Right ventricle myocardium inferior (tissue), 1 donor: ENCODE measurements at regions of chr5 and their contacts with region 1.

Region 1: GRCh38 chr5:17216176-17216973 is 1.1 kb upstream of the BASP1 start:
- DNase-seq: peak; percentile 78
- ATAC-seq: peak; percentile 64

Region 2: DNA sequence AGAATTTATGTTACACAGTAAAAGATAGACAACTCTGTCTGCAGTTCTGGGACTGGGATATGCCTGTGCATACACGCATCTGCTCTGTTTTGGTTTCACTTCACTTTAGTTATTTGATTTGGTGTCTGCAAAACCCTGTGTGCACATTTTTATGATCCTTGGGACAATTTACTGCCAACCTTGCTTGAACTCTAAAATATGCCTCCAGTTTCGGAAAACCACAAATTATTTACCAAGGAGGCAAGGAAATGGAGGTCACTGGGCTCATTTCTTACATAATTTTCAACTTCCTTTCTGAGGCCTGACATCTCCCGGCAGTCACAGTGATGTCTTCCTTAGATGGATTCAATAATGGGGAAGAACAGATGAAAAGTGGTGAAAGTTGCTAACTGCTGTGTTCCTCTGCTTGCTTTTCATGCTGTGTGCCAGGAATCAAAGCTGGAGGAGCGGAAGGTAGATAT is 220.4 kb after region 1 on chr5:
- intact Hi-C with region 1: no loop called
- DNase-seq: no peak
- ATAC-seq: peak; percentile 64

Region 3: DNA sequence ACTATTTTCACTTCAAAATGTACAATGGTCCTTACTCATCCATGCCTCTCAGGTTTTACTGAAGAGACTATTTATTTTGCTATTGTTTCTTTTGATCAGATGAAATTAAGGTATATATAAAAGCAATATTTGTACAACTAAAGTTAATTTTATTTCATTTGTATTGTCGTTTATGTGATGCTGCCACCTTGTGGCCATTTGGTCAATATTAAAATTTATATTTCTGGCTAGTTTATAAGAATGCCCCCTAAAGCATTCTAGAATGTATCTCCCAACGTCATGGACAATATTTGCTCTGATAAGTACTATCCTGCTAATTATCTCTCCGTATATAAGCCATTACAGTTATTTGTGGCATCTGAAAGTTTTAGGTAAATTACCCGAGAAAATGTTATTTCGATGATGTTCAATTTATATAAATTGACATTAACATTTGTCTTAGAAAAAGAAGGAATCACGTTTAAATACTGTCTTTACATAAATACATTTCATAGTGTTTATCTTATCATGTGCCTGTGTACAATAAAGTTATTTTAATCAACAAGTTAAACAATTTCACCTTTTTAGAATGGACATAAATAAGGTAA is 1097.9 kb after region 1 on chr5:
- intact Hi-C with region 1: loop called (anchors 1 kb)
- DNase-seq: no peak
- ATAC-seq: no peak